Left ventricle myocardium inferior (tissue), 1 donor: ENCODE measurements at regions of chrX and their contacts with region 1.

Region 1: DNA sequence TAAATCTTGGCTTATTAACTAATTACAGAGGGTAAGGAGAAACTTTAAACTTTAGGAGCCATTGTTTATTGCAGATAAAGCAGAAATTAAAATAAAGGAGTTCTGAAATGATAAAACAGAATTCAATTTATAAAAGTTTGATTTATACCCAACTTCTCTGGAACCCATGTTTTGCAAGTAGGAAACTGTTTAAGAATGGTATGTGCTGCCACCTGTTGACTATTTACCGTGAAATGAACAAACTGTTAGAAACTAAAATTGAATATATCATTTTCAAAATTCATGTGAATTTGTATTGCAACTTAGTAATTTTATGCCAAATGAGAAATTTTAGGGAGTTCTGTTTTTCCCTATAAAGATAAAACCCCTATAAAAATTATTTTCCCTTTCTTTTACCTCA is 11.0 kb upstream of the TBC1D8B start:
- DNase-seq: no peak
- H3K4me3 ChIP-seq: no peak overlapping the region
- H3K27ac ChIP-seq: no peak overlapping the region
- H3K4me1 ChIP-seq: no peaks in the 10 kb centered on the region
- H3K27me3 ChIP-seq: no peaks in the 10 kb centered on the region
- CTCF ChIP-seq: peak; percentile 47

Region 2: DNA sequence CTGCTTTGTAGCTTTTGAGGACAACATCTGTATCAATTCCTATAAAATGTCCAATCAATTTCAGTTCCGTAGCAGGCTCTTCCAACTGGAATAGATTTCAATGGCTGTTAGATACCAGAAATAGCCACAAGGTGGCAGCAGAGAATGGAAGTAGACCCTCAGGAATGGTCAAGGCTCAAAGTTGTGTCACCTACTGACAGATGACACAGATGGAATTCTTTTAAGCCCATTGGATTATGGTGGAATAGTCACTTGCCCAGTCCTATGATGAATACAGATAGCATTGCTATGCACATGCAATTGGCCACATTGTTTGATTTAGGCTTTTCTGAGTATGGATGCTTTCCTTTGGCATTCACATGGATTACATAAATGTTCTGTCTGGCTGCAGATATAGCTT is 310.2 kb before region 1 on chrX:
- intact Hi-C with region 1: loop called (anchors 10 kb)
- DNase-seq: no peak
- H3K4me3 ChIP-seq: no peak overlapping the region
- H3K27ac ChIP-seq: no peak overlapping the region
- H3K4me1 ChIP-seq: no peaks in the 10 kb centered on the region
- H3K27me3 ChIP-seq: no peaks in the 10 kb centered on the region
- CTCF ChIP-seq: peak; percentile 73

Region 3: DNA sequence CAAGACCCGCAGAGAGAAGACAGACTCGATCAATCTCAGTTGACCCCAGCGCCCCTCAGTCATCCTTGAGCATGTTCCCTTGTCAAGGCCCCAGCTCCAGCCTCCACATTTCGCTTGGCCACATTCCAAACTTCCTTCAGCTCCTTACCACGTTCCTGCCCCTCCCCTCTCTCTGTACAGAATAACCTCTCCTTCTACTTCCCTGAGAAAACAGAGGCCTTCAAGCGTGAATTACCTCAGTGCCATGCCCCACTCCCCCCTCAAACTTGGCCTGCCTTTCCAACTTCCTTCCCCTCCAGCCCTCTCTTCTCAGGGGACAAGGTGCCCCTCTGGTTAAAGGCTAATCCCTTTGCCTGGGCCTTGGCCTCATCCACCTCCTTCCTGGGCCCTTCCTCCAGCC is 114.9 kb after region 1 on chrX:
- intact Hi-C with region 1: no loop called
- DNase-seq: no peak
- H3K4me3 ChIP-seq: no peak overlapping the region
- H3K27ac ChIP-seq: no peak overlapping the region
- H3K4me1 ChIP-seq: no peaks in the 10 kb centered on the region
- H3K27me3 ChIP-seq: no peaks in the 10 kb centered on the region
- CTCF ChIP-seq: no peak